PC-9 (cell line): ENCODE measurements at regions of chr17 and their contacts with region 1.

Region 1: GRCh38 chr17:17729620-17730249 is 48.5 kb downstream of the RAI1 start:
- DNase-seq: peak; percentile 66 to 72
- H3K4me3 ChIP-seq: peak overlapping the region; percentile 13; the same call in 1 of the 2 replicates
- H3K27ac ChIP-seq: peak overlapping the region; percentile 40; the same call in 1 of the 2 replicates
- H3K4me1 ChIP-seq: peaks cover 74% of the 10 kb centered on the region
- H3K27me3 ChIP-seq: no peaks in the 10 kb centered on the region
- CTCF ChIP-seq: peak; percentile 86

Region 2: GRCh38 chr17:17535957-17536356 is 193.8 kb before region 1 on chr17:
- CTCF ChIA-PET with region 1: no interaction called
- POLR2A ChIA-PET with region 1: no interaction called
- intact Hi-C with region 1: no loop called
- DNase-seq: no peak
- H3K4me3 ChIP-seq: no peak overlapping the region
- H3K27ac ChIP-seq: no peak overlapping the region
- H3K4me1 ChIP-seq: peaks cover 21% of the 10 kb centered on the region
- H3K27me3 ChIP-seq: no peaks in the 10 kb centered on the region
- CTCF ChIP-seq: no peak

Region 3: GRCh38 chr17:17752089-17752820 is 22.5 kb after region 1 on chr17:
- CTCF ChIA-PET with region 1: interaction called, 21 read pairs
- POLR2A ChIA-PET with region 1: no interaction called
- intact Hi-C with region 1: loop called (anchors 1 kb)
- DNase-seq: peak; percentile 87 to 99
- H3K4me3 ChIP-seq: peak overlapping the region; percentile 56; the same call in 1 of the 2 replicates
- H3K27ac ChIP-seq: peak overlapping the region; percentile 34
- H3K4me1 ChIP-seq: peaks cover 24% of the 10 kb centered on the region
- H3K27me3 ChIP-seq: no peaks in the 10 kb centered on the region
- CTCF ChIP-seq: peak; percentile 52; the same call in 1 of the 2 replicates

Region 4: DNA sequence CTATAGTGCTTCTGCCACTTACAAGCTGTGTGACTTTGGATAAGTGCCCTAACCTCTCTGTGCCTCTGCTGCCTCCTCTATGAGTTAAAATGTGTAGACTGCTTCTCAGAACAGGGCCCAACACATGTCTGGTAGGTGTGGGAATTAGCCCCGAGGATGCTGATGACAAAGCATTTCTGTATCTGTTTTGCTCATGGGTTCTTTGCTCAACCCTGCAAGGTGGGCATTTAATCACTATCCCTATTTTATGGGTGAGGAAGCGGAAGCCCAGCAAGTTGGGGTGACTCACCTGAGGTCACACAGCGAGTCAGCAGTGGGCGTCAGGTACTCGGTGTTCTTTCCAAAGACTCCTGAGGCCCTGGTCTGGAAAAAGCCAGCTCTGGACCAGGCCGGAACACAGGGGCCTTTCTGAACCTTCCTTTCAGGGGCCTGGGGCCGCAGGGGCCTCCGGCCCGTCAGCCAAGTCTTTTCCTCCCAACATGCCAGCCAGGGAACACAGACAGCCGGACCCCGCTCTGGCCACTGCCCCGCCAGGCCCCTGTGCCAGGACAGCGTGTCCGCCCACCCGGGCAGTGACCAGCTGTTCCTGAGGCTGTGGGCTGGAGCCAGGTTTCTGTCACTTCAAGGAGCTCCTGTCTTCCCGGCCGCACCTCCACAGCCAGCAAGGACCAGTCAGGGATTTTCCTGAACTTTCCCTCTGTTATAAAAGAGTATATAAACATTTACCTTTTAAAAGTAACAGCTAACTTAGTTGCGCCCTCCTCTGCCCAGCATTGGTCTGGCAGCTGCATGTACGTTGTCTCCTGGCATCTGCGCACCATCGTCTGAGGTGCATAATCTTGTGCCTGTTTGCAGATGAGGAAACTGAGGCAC is 44.5 kb after region 1 on chr17:
- CTCF ChIA-PET with region 1: interaction called, 3 read pairs
- POLR2A ChIA-PET with region 1: interaction called, 12 read pairs
- intact Hi-C with region 1: no loop called
- DNase-seq: peak in 1 of 2 experiments; percentile 68
- H3K4me3 ChIP-seq: no peak overlapping the region
- H3K27ac ChIP-seq: peak overlapping the region; percentile 51
- H3K4me1 ChIP-seq: peaks cover 16% of the 10 kb centered on the region; the same call in 1 of the 2 replicates
- H3K27me3 ChIP-seq: no peaks in the 10 kb centered on the region
- CTCF ChIP-seq: peak; percentile 61

Region 5: DNA sequence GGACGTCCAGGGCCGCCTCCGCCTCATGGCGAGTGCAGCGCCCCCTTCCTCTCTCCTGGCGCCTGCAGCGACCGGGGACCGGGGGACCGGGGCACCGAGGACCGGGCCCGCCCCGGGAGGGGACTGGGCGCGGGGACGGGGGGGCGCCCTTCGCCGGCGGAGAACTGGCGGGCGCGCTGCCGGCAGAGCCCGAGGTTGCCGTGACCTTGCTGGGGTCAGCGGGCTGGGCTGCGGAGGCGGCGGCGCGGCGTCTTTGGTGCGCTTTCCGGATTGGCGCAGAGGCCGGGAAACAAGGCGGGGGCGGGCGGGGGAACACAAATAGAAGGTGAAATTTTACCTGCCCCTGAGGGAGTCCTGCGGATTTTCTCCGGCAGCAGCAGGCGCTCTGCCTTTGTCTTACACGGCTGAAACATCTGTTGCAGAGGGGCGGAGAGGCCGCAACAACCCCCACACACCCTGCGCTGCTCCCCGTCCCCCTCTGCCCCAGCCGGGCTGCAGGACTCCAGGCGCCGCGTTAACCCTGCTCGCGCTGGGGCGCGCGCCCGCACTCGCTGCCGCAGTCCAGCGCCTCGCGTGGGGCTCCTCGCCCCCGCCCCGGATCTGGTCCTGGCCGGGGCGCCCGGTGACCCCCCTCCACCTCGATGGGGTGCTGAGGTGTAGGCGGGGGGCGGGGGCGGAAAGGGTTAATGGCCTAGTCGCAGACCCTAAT is 53.5 kb after region 1 on chr17:
- CTCF ChIA-PET with region 1: no interaction called
- POLR2A ChIA-PET with region 1: interaction called, 12 read pairs
- intact Hi-C with region 1: loop called (anchors 1 kb)
- DNase-seq: peak in 1 of 2 experiments; percentile 70
- H3K4me3 ChIP-seq: peak overlapping the region; percentile 31; the same call in 1 of the 2 replicates
- H3K27ac ChIP-seq: no peak overlapping the region
- H3K4me1 ChIP-seq: peaks cover 16% of the 10 kb centered on the region
- H3K27me3 ChIP-seq: no peaks in the 10 kb centered on the region
- CTCF ChIP-seq: no peak

Region 6: GRCh38 chr17:17935321-17936271 is 205.9 kb after region 1 on chr17:
- CTCF ChIA-PET with region 1: no interaction called
- POLR2A ChIA-PET with region 1: no interaction called
- intact Hi-C with region 1: no loop called
- DNase-seq: peak; percentile 64 to 93
- H3K4me3 ChIP-seq: 0 out of 2 replicates have a peak overlapping the region, but pooled peaks have one; percentile 11
- H3K27ac ChIP-seq: peak overlapping the region; percentile 65
- H3K4me1 ChIP-seq: peaks cover 37% of the 10 kb centered on the region
- H3K27me3 ChIP-seq: no peaks in the 10 kb centered on the region
- CTCF ChIP-seq: no peak